Dorsolateral prefrontal cortex (tissue), 120 donors: ENCODE measurements at regions of chr2 and their contacts with region 1.

Region 1: GRCh38 chr2:68909793-68910674 is 38.8 kb upstream of the BMP10 start:
- DNase-seq: peak in 9 of 10 donors; percentile 13 to 72 (median 55)
- H3K4me3 ChIP-seq: no peak overlapping the region
- H3K27ac ChIP-seq: no peak overlapping the region
- H3K27me3 ChIP-seq: no peaks in the 10 kb centered on the region
- CTCF ChIP-seq: peak; percentile 77 to 98 (median 92)

Region 2: GRCh38 chr2:68807821-68808266 is 102.2 kb before region 1 on chr2:
- intact Hi-C with region 1: loop called in 1 of 2 experiments (anchors 5 kb)
- DNase-seq: no peak
- H3K4me3 ChIP-seq: no peak overlapping the region
- H3K27ac ChIP-seq: no peak overlapping the region
- H3K27me3 ChIP-seq: peaks cover 0 to 4% (median 0%) of the 10 kb centered on the region in 45 donors
- CTCF ChIP-seq: no peak